Naive thymus-derived CD8-positive, alpha-beta T cell (primary cell): ENCODE measurements at regions of chr3 and their contacts with region 1.

Region 1: DNA sequence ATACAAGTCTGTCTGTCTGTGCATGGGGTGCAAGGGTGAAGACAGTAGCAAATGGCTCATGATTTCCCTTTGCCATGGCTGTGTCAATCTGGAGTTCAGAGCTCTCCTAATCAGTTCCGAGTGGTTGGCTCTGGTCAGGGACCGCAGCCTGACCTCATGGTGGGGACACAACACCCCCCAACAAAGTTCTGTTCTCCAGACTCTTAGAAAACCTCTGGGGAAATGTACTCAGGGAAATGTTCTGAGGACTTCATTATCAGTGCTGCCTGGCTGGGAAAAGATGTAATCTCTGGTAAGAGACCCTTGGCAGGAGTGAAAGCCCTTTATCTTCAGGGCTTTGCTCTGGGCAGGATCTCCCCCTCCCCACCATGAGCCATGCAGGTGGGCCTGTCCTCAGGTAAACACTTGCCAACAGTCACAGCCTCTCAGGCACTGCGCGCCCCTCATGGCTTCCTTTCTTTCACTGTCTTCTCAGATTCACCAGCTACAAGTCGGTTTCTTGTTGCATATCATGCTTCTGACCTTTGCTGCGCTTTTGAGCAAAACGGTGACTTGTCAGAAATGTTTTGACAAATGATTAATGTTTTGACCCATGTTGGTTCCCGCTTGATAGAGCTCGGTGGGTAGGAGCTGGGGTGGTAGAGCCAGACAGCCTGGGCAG is 95.5 kb downstream of the ST6GAL1 start:
- DNase-seq: peak in 2 of 10 donors; percentile 39 to 43
- ATAC-seq: peak; percentile 10 to 18
- H3K4me3 Mint-ChIP-seq: peak overlapping the region; percentile 85 to 95 (median 90)
- H3K27ac Mint-ChIP-seq: peak overlapping the region; percentile 88 to 99 (median 94)
- H3K4me1 Mint-ChIP-seq: peaks cover 36 to 90% (median 67%) of the 10 kb centered on the region in 4 donors
- H3K27me3 Mint-ChIP-seq: no peaks in the 10 kb centered on the region

Region 2: DNA sequence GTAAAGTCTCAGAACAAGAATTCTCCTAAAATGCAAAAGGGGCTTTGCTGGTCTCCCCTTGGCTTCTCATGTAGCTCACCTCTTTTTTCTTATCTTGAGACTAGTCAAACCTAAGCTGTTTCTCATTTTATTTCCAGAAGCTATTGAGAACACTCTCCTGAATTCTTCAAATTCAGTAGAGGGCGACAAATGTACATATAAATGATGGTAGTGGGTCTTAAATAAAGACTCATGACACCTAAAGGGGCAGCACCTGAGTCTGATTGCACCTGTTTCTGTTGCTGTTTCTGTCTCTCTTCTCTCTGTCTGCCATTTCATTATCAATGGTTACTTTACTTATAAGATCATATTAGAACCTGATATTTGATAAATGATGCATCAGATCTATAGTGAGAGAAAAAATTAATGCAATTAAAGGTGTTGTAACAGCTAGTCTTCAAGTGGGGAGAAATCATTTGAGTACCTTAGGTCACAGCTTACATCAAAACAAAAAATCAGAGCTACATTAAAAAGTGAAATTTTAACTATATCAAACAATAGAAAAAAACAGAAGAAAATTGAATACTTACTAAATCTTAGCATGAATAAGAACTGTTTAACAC is 176.3 kb before region 1 on chr3:
- POLR2A ChIA-PET with region 1: interaction called, 13 read pairs
- DNase-seq: peak in 5 of 10 donors; percentile 13 to 77 (median 60)
- ATAC-seq: peak; percentile 99 to 100
- H3K4me3 Mint-ChIP-seq: peak overlapping the region in 1 of 10 donors; percentile 41
- H3K27ac Mint-ChIP-seq: peak overlapping the region in 6 of 10 donors; percentile 51 to 84 (median 71)
- H3K4me1 Mint-ChIP-seq: peaks cover 12 to 29% (median 19%) of the 10 kb centered on the region in 4 donors
- H3K27me3 Mint-ChIP-seq: peaks cover 0 to 6% (median 5%) of the 10 kb centered on the region in 5 donors

Region 3: DNA sequence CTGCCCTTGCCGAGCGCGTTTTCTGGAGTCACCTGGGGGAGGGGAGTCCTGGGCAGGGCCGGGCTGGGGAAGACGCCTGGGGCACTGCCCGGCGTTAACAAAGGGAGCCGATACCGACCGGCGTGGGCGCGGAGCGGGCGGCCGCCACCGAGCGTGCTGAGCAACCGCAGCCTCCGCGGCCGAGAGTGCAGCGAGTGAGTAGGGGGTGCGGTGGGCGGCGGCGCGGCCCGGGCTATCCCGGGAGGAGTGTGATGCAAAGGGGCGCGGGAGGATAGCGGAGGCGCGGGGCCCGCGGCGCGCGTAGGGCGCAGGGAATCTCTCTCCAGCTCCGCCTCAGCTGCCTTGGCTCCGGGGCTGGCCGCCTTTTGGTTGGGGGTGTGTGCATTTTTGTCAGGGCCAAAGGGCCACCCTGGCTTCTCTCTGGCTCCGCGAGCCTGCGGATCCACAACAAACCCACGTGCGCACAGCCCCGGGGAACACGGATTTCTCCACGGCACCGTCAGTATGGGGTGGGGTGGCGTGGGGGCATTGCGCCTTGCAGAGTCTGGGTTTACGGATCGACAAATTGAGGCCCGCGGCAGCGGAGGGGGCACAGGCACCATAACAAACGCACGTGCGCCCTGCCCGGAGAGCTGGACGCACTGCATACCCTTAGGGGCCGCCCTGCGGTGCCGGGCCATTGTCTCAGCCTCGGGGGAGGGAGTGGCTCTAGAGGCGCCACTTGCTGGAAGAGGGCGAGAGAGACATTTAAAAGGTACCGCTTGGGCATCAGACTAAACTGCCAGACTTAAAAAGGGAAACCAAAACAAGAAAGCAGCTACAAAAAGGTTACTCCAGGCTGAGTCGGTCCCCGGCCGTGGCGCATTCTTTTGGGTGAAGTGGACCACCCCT is 94.9 kb before region 1 on chr3:
- POLR2A ChIA-PET with region 1: interaction called, 60 read pairs
- DNase-seq: peak; percentile 41 to 84 (median 65)
- ATAC-seq: peak; percentile 80
- H3K4me3 Mint-ChIP-seq: peak overlapping the region; percentile 95 to 100 (median 99)
- H3K27ac Mint-ChIP-seq: peak overlapping the region; percentile 93 to 97 (median 96)
- H3K4me1 Mint-ChIP-seq: peaks cover 26 to 51% (median 43%) of the 10 kb centered on the region in 4 donors
- H3K27me3 Mint-ChIP-seq: no peaks in the 10 kb centered on the region

Region 4: DNA sequence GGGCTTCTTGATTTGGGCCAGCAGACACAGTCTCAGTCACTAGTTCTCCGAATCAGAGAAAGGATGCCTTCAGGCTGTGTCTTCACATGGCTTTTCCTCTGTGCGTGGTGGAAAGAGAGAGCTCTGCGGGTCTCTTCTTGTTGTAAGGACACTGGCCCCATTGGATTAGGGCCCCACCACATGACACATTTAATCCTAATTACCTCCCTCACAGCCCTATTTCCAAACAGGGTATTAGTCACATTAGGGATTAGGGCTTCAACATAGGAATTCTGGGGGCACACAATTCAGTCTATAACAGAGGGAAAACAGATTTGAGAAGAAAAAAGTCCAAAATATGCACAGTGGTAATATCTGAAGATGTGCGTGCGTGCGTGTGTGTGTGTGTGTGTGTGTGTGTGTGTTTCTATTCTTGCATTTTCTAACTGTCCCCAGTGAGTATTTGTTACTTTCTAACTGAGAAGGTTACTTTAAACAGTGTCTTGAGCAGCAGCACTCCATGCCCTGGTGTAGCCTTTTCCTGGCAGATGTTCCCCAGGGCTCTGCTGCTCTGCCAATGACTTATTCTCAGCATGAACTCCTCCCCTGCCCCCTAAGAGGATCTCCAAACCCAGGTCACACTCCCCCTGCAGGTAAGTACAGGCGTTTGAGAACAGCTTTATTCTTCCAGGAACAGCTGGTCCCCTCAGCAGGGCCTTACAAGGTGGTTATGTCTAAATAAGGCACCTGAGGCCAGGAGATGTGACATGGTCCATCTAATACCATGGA is 40.6 kb after region 1 on chr3:
- POLR2A ChIA-PET with region 1: interaction called, 19 read pairs
- DNase-seq: peak in 9 of 10 donors; percentile 12 to 81 (median 54)
- ATAC-seq: peak; percentile 81 to 89
- H3K4me3 Mint-ChIP-seq: peak overlapping the region in 6 of 10 donors; percentile 23 to 57 (median 40)
- H3K27ac Mint-ChIP-seq: peak overlapping the region; percentile 79 to 95 (median 90)
- H3K4me1 Mint-ChIP-seq: peaks cover 40 to 85% (median 76%) of the 10 kb centered on the region in 4 donors
- H3K27me3 Mint-ChIP-seq: no peaks in the 10 kb centered on the region

Region 5: DNA sequence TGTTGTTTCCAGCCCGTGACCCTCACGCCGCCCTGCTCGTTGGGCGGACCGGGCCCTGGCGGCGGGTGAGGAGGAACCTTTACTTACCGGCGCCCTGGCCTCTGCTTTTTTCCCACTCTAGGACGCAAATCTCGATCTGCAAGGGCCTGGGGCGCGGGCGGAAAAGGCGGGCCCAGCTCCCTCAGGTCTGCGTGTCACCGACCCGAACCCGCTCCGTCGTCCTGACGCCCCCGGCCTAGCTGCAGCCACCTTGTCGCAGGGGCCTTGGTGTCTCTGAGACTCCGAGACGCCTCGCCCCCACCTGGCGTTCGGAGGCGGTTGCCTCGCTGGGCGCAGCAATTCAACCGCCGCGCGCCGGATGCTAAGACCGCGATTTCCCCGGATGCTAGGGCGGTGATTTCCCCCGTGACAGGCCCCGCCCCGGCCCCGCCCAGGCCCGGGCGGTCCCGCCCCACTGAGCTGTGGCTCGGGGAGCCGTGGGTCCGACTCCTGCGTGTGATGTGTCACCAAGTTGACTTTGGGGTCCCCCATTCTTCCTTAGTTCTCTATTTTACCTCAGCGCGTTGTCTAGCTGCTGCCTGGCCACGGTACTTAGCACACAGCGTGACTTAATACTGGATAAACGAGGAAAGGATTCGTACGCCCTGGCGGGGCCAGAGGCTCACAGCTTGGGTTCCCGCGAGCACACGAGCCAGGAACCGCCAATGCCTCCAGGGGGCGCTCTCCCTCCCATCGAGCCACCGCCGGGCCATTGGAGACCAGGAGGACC is 113.5 kb after region 1 on chr3 and contains the start of gene RPL39L:
- POLR2A ChIA-PET with region 1: interaction called, 19 read pairs
- DNase-seq: peak; percentile 87 to 96 (median 93)
- ATAC-seq: peak; percentile 95 to 96
- H3K4me3 Mint-ChIP-seq: peak within 1 kb of the TSS; percentile 84 to 94 (median 92)
- H3K27ac Mint-ChIP-seq: peak within 1 kb of the TSS; percentile 88 to 98 (median 96)
- H3K4me1 Mint-ChIP-seq: peaks cover 6 to 23% (median 12%) of the 10 kb centered on the region in 4 donors
- H3K27me3 Mint-ChIP-seq: no peaks in the 10 kb centered on the region
- polyA plus RNA-seq, gene RPL39L: 3.8 to 11.2 (median 4.4) TPM